ENCODE measurements at regions of chr15 and their contacts with region 1.

Region 1: DNA sequence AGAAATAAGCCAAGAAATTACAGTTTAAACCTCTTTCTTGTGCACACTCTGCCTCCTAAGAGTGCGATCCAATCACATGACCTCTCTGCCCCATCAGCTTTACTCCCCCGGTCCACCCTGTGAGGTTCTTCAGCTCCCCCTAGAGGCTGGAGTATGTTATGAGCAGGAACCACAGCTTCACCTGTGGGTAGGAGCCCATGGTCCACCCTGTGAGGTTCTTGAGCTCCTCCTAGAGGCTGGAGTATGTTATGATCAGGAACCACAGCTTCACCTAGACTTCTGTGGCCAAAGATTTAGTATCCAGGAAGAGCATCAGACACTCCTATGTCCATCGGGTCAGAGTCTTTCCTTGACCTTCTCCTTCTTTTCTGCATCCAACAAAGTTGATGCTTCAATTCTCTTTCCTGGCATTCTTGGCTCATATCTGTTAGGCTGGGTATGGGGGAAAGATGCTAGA is 163.9 kb downstream of the MINAR1 start:
- DNase-seq: peak; percentile 95 to 96
- ATAC-seq: peak; percentile 89 to 98
- H3K4me3 ChIP-seq: no peak overlapping the region
- H3K27ac ChIP-seq: no peak overlapping the region
- H3K4me1 ChIP-seq: no peaks in the 10 kb centered on the region
- CTCF ChIP-seq: peak; percentile 92
- EP300 ChIP-seq: no peak
- POLR2A ChIP-seq: no peak
- RAD21 ChIP-seq: peak; percentile 81 to 96

Region 2: DNA sequence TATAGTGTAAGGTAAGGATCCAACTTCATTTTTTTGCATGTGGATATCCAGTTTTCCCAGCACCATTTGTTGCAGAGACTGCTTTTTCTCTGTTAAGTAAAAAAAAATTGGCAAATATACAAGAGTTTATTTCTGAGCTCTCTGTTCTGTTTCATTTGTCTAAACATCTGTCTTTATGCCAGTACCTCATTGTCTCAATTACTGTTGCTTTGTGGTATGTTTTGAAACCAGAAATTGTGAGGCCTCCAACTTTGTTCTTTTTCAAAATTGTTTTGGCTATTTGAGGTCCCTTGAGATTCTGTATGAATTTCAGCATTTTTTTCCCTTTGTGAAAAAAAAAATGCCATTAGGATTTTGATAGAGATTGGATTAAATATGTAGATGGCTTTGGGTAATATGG is 13.4 kb before region 1 on chr15:
- CTCF ChIA-PET with region 1: interaction called, 14 read pairs
- POLR2A ChIA-PET with region 1: no interaction called
- DNase-seq: no peak
- ATAC-seq: no peak
- H3K4me3 ChIP-seq: no peak overlapping the region
- H3K27ac ChIP-seq: no peak overlapping the region
- H3K4me1 ChIP-seq: no peaks in the 10 kb centered on the region
- CTCF ChIP-seq: no peak
- EP300 ChIP-seq: no peak
- POLR2A ChIP-seq: no peak
- RAD21 ChIP-seq: no peak

Measured in A549 (cell line).